Psoas muscle (tissue), 8 donors: ENCODE measurements at regions of chr17 and their contacts with region 1.

Region 1: GRCh38 chr17:385926-386876 is 33.6 kb upstream of the RPH3AL start:
- DNase-seq: peak; percentile 84 to 90
- ATAC-seq: peak; percentile 74 to 88 (median 82)
- H3K4me3 ChIP-seq: peak overlapping the region; percentile 59
- H3K27ac ChIP-seq: peak overlapping the region; percentile 58
- H3K4me1 ChIP-seq: no peaks in the 10 kb centered on the region
- H3K27me3 ChIP-seq: peaks cover 0 to 44% (median 0%) of the 10 kb centered on the region in 3 donors
- CTCF ChIP-seq: peak; percentile 77

Region 2: DNA sequence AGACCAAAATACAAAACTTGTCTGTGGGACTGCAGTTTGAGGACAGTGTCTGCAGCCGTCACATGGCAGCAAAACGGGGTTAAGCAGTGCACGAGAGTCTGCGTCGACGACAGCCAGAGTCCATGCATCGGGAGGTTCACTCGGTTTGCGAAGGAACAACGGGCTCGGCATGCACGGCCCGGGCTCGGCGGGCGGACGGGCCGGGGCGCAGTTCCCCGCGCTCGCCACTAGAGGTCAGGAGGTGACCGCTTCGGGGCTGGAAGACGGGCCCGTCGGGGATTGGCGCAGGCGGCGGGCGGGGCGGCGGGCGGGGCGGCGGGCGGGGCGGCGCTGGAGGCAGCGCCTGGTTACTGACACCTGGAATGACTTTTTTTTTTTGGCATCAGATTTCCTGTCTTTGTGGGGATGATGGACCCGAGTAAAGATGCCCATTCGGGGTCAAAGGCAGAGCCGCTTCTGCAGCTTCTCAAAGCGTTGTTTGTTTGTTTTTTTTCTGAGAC is 242.4 kb before region 1 on chr17:
- intact Hi-C with region 1: loop called (anchors 2 to 5 kb)
- DNase-seq: peak; percentile 84 to 93
- ATAC-seq: peak; percentile 91 to 97 (median 94)
- H3K4me3 ChIP-seq: no peak overlapping the region
- H3K27ac ChIP-seq: no peak overlapping the region
- H3K4me1 ChIP-seq: no peaks in the 10 kb centered on the region
- H3K27me3 ChIP-seq: no peaks in the 10 kb centered on the region
- CTCF ChIP-seq: peak; percentile 94

Region 3: GRCh38 chr17:164303-165235 is 221.6 kb before region 1 on chr17:
- intact Hi-C with region 1: loop called in 1 of 2 experiments (anchors 2 kb)
- DNase-seq: no peak
- ATAC-seq: peak; percentile 46 to 76 (median 64)
- H3K4me3 ChIP-seq: no peak overlapping the region
- H3K27ac ChIP-seq: no peak overlapping the region
- H3K4me1 ChIP-seq: no peaks in the 10 kb centered on the region
- H3K27me3 ChIP-seq: no peaks in the 10 kb centered on the region
- CTCF ChIP-seq: peak; percentile 44

Region 4: DNA sequence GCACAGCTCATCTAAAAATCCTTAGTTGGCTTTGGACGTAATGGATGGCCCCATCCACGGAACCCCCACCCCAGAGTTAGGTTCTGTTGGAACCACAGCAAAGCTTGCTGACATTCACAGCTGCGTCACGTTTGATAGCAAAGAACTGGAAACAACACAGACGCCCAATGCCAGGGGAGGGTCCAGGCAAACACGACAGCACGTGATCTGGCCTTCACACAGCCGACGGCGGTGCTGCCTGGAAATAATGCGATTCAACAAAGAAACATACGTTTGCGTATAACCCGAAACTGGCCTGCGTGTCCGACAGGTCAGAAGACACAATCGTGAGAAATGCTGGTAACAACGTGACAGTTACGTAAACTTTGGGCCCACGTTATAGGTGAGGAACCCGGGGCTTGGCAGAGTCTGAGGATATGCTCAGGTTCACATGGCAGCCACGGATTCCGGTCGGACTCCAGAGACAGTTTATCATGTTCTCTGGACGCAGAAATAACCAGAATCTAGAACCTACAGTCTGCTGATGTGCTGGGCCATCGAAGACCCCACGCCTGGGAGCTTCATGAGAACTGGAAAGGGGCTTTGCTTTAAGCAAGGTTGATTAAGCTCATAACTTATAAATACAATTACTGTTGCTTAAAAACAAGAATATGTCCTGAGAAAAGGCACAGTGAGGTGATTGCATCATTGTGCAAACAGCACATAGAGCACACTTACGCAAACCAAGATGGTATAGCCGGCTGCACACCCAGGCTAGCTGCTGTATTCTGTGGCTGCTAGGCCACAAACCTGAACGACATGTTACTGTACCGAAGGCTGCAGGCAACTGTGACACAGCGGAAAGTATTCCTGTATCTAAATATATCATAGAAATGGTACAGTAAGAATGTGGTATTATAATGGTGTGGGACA is 103.9 kb before region 1 on chr17:
- intact Hi-C with region 1: no loop called
- DNase-seq: no peak
- ATAC-seq: peak in 1 of 4 donors; percentile 19
- H3K4me3 ChIP-seq: no peak overlapping the region
- H3K27ac ChIP-seq: no peak overlapping the region
- H3K4me1 ChIP-seq: no peaks in the 10 kb centered on the region
- H3K27me3 ChIP-seq: no peaks in the 10 kb centered on the region
- CTCF ChIP-seq: no peak

Region 5: DNA sequence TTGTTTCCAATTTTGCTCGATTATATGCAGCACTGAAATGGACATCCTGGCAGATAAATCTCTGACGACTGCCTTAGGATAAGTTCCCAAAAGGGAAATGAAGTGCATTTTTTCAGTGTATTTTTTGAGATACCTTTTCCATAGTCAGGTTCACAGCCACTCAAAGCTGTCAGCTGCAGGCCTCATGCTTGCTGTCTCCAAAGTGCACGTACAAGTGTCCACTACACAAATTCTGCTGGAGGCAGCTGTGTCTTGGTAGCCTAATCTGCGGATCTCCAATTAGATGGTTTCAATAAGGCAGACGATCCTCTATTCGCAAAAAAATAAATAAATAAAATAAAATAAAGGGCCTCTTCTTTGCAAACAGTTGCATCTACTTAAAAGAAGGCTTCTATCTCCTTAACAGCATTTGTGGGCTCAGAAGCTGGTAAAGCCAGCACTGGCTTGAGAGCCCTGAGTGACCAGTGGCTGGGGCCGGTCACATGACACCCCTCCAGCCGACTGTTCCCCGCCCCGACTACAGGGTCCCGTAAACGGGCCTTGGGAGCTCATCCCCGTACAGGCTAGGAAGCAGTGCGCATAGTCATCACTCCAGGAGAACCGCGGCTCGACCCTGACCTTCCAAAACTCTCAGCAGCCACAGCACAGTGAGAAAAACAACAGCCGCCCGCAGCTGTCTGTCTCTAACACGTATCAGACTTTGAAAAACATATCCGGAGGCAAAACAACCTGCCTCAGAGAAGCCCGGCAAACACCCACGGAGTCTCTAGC is 52.4 kb before region 1 on chr17:
- intact Hi-C with region 1: loop called in 1 of 2 experiments (anchors 5 kb)
- DNase-seq: peak; percentile 88 to 92
- ATAC-seq: peak; percentile 87 to 91 (median 90)
- H3K4me3 ChIP-seq: peak overlapping the region; percentile 61
- H3K27ac ChIP-seq: peak overlapping the region; percentile 77
- H3K4me1 ChIP-seq: peaks cover 19% of the 10 kb centered on the region
- H3K27me3 ChIP-seq: no peaks in the 10 kb centered on the region
- CTCF ChIP-seq: no peak